Endothelial cell of umbilical vein (primary cell): ENCODE measurements at regions of chrX and their contacts with region 1.

Region 1: DNA sequence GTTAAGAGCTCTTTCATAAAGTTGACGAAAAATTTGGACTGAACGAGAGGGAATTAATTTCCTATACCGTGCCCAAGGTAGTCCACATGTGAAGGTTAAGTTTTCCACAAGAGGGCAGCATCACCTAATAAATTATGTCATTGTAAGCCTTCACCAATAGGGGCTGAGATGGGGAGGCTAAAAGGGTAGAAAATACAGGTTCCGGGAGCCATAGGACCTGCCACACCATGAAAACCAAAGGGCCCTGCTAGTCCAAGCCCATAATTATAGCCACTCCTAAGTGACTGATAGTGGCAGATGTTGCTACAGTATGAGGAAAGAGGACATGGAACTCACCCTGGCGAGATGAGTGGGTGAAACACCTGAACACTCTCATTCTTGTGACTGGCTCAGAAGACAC is 122.2 kb downstream of the SHROOM4 start:
- DNase-seq: peak; percentile 43
- H3K4me3 ChIP-seq: no peak overlapping the region
- H3K27ac ChIP-seq: no peak overlapping the region
- H3K4me1 ChIP-seq: peaks cover 7% of the 10 kb centered on the region
- H3K27me3 ChIP-seq: no peaks in the 10 kb centered on the region
- CTCF ChIP-seq: peak; percentile 25 to 32
- POLR2A ChIP-seq: no peak

Region 2: DNA sequence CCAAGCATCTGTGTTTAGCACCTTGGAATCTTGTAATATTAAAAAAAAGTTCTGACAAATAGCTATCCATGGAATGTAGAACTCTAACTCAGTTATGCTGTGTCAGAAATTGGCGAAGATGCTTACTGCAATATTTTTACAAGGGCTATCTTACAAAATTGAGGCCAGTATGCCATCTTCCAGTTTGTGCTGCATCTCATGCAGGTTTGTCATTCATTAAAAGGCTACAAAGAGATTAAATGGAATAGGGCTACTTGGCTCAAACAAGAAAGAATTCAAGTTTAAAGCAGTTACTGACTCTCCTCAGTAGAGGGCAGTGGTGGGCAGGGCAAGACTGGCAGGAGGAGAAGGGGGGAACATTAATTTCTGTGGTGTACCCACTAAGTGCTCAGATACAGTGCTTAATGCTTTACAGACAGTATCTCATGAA is 55.7 kb after region 1 on chrX:
- CTCF ChIA-PET with region 1: interaction called, 19 read pairs
- POLR2A ChIA-PET with region 1: no interaction called
- dilution Hi-C with region 1: no loop called
- intact Hi-C with region 1: loop called (anchors 1 kb)
- DNase-seq: peak; percentile 32
- H3K4me3 ChIP-seq: no peak overlapping the region
- H3K27ac ChIP-seq: no peak overlapping the region
- H3K4me1 ChIP-seq: no peaks in the 10 kb centered on the region
- H3K27me3 ChIP-seq: no peaks in the 10 kb centered on the region
- CTCF ChIP-seq: peak; percentile 55 to 56
- POLR2A ChIP-seq: no peak

Region 3: DNA sequence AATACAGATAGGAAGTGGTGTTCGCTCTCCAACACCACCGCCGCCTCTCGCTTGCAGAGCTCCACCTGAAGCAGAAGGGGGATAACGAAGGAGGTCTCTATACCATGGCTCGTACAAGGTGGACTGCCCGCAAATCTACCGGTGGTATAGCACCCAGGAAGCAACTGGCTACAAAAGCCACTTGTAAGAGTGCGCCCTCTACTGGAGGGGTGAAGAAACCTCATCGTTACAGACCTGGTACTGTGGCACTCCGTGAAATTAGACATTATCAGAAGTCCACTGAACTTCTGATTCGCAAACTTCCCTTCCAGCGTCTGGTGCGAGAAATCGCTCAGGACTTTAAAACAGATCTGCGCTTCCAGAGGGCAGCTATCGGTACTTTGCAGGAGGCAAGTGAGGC is 213.5 kb after region 1 on chrX:
- CTCF ChIA-PET with region 1: interaction called, 20 read pairs
- POLR2A ChIA-PET with region 1: no interaction called
- dilution Hi-C with region 1: no loop called
- intact Hi-C with region 1: loop called (anchors 1 kb)
- DNase-seq: no peak
- H3K4me3 ChIP-seq: no peak overlapping the region
- H3K27ac ChIP-seq: no peak overlapping the region
- H3K4me1 ChIP-seq: no peaks in the 10 kb centered on the region
- H3K27me3 ChIP-seq: peaks cover 0 to 2% of the 10 kb centered on the region in 2 experiments
- CTCF ChIP-seq: peak in 1 of 2 donors; percentile 5
- POLR2A ChIP-seq: no peak

Region 4: DNA sequence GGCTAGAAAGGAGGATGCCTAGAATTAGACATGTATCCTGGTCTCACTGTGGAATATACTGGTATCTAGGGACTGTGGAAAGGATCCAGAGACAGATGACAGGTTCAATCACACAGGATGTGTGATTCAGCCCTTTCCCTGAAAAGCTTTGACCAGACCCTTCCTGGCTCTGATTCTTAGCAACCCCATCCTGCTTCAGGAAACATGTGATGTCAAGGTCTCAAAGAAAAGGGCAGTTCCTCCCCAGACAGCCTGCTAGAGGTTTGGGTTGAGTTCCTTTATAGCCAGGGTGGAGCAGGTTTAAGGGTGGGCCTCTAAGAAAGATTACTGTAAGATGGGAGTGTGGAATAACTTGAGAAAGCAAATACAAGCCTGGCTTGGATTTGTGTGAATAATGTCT is 221.7 kb after region 1 on chrX:
- CTCF ChIA-PET with region 1: interaction called, 8 read pairs
- POLR2A ChIA-PET with region 1: no interaction called
- dilution Hi-C with region 1: no loop called
- intact Hi-C with region 1: loop called (anchors 2 kb)
- DNase-seq: peak; percentile 74
- H3K4me3 ChIP-seq: no peak overlapping the region
- H3K27ac ChIP-seq: peak overlapping the region; percentile 2
- H3K4me1 ChIP-seq: peaks cover 6% of the 10 kb centered on the region
- H3K27me3 ChIP-seq: no peaks in the 10 kb centered on the region
- CTCF ChIP-seq: no peak
- POLR2A ChIP-seq: no peak

Region 5: DNA sequence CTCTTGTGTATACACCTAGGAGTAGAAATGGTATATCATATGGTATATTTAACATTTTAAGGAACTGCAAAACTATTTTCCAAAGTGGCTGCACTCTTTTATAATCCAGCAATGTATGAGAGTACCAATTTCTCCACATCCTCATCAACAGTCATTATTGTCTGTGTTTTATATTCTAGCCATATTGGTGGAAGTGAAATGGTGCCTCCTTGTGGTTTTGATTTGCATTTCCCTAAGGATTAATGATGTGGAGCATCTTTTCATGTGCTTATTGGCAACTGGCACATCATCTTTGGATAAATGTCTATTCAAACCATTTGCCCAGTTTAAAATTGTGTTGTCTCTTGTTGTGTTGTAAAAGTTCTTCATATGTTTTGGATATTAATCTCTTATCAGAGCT is 228.3 kb after region 1 on chrX:
- CTCF ChIA-PET with region 1: interaction called, 9 read pairs
- POLR2A ChIA-PET with region 1: no interaction called
- dilution Hi-C with region 1: no loop called
- intact Hi-C with region 1: loop called (anchors 1 kb)
- DNase-seq: peak; percentile 46
- H3K4me3 ChIP-seq: no peak overlapping the region
- H3K27ac ChIP-seq: no peak overlapping the region
- H3K4me1 ChIP-seq: no peaks in the 10 kb centered on the region
- H3K27me3 ChIP-seq: no peaks in the 10 kb centered on the region
- CTCF ChIP-seq: peak in 1 of 2 donors; percentile 31
- POLR2A ChIP-seq: no peak

Region 6: GRCh38 chrX:50988649-50989048 is 296.8 kb after region 1 on chrX:
- CTCF ChIA-PET with region 1: interaction called, 12 read pairs
- POLR2A ChIA-PET with region 1: no interaction called
- dilution Hi-C with region 1: no loop called
- intact Hi-C with region 1: loop called (anchors 2 kb)
- DNase-seq: peak; percentile 21
- H3K4me3 ChIP-seq: no peak overlapping the region
- H3K27ac ChIP-seq: no peak overlapping the region
- H3K4me1 ChIP-seq: no peaks in the 10 kb centered on the region
- H3K27me3 ChIP-seq: peaks cover 2 to 9% of the 10 kb centered on the region in 2 experiments
- CTCF ChIP-seq: peak; percentile 31 to 47
- POLR2A ChIP-seq: no peak

Region 7: GRCh38 chrX:52261463-52262194 is 1569.8 kb after region 1 on chrX:
- CTCF ChIA-PET with region 1: no interaction called
- POLR2A ChIA-PET with region 1: no interaction called
- dilution Hi-C with region 1: no loop called
- intact Hi-C with region 1: loop called (anchors 5 kb)
- DNase-seq: peak; percentile 76
- H3K4me3 ChIP-seq: peak overlapping the region; percentile 26 to 67 (median 51)
- H3K27ac ChIP-seq: peak overlapping the region; percentile 61
- H3K4me1 ChIP-seq: no peaks in the 10 kb centered on the region
- H3K27me3 ChIP-seq: no peaks in the 10 kb centered on the region
- CTCF ChIP-seq: peak; percentile 65 to 68
- POLR2A ChIP-seq: peak; percentile 73